Transverse colon (tissue), 4 donors: ENCODE measurements at regions of chr3 and their contacts with region 1.

Region 1: GRCh38 chr3:37832480-37832879 is 29.2 kb upstream of the CTDSPL start:
- DNase-seq: no peak
- H3K4me3 ChIP-seq: no peak overlapping the region
- H3K27ac ChIP-seq: no peak overlapping the region
- H3K4me1 ChIP-seq: no peaks in the 10 kb centered on the region
- H3K27me3 ChIP-seq: no peaks in the 10 kb centered on the region
- CTCF ChIP-seq: no peak
- EP300 ChIP-seq: no peak
- POLR2A ChIP-seq: no peak

Region 2: DNA sequence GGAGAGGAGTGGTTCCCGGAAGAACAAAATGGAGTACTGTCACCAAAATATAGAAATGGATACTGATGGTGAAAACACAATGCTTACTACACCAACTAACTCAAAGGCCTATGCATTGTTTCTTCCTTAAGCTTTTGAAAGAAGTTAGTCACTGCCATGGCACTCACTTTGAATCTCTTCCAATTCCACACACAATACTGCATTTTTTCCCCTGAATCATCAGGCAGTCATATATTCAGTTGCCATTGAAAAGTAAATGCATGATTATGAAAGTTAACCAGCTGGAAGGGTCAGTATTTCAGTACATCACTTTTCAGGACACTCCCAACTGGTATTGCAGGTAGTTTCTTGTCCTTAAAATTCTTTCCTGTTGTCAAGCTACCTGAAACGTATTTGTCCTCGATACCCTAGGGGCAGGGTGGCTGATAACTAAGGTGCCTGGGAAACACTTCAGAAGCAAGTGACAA is 649.1 kb before region 1 on chr3:
- in situ Hi-C with region 1: no loop called
- intact Hi-C with region 1: no loop called
- DNase-seq: no peak
- H3K4me3 ChIP-seq: no peak overlapping the region
- H3K27ac ChIP-seq: peak overlapping the region; percentile 29 to 65 (median 52)
- H3K4me1 ChIP-seq: peaks cover 6 to 20% (median 11%) of the 10 kb centered on the region in 4 donors
- H3K27me3 ChIP-seq: no peaks in the 10 kb centered on the region
- CTCF ChIP-seq: no peak
- EP300 ChIP-seq: no peak
- POLR2A ChIP-seq: no peak

Region 3: DNA sequence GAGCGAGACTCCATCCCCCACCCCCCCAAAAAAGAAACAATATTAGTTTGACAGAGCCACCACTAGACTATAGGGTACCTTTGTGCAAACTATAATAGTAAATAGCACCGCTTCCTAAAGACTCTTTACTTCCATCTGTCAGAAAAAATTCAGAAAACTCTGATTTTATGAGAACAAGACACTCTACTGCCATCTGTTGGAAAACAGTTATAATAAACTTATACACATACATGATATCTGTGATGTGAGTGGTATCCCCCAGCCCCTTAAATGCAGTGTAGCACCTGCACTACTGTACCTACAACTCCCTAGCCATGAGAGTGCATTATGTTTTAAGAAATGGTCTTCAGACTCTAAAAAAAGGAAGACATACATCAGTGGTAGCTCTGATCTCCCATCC is 17.9 kb before region 1 on chr3:
- in situ Hi-C with region 1: no loop called
- intact Hi-C with region 1: loop called (anchors 1 kb)
- DNase-seq: no peak
- H3K4me3 ChIP-seq: no peak overlapping the region
- H3K27ac ChIP-seq: no peak overlapping the region
- H3K4me1 ChIP-seq: peaks cover 10 to 35% (median 14%) of the 10 kb centered on the region in 4 donors
- H3K27me3 ChIP-seq: no peaks in the 10 kb centered on the region
- CTCF ChIP-seq: peak in 4 of 5 experiments; percentile 23 to 34 (median 28)
- EP300 ChIP-seq: no peak
- POLR2A ChIP-seq: no peak